ENCODE measurements at regions of chr6 and their contacts with region 1.

Region 1: DNA sequence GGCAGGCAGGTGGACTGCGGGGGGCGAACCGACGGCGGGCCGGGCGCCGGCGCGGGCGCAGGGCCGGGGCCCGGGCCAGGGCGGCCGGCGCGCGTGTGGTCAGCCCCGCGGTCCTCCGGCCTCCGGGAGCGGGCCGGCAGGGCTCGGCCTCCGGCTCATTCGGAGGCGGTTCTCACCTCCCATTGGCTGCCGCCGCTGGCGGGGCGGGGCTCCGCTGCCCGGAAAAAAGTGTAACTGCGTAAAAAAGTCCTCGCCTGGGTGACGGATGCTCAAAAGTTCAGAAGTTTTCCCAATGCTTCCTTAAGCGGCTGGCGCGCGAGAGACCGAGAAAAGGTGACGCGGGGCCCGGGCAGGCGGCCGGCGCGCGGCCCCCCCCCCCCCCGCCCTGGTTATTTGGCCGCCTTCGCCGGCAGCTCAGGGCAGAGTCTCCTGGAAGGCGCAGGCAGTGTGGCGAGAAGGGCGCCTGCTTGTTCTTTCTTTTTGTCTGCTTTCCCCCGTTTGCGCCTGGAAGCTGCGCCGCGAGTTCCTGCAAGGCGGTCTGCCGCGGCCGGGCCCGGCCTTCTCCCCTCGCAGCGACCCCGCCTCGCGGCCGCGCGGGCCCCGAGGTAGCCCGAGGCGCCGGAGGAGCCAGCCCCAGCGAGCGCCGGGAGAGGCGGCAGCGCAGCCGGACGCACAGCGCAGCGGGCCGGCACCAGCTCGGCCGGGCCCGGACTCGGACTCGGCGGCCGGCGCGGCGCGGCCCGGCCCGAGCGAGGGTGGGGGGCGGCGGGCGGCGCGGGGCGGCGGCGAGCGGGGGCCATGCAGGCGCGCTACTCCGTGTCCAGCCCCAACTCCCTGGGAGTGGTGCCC is at the start of gene FOXC1:
- DNase-seq: peak; percentile 92
- ATAC-seq: peak; percentile 95
- total RNA-seq, gene FOXC1: 2.7 TPM

Region 2: DNA sequence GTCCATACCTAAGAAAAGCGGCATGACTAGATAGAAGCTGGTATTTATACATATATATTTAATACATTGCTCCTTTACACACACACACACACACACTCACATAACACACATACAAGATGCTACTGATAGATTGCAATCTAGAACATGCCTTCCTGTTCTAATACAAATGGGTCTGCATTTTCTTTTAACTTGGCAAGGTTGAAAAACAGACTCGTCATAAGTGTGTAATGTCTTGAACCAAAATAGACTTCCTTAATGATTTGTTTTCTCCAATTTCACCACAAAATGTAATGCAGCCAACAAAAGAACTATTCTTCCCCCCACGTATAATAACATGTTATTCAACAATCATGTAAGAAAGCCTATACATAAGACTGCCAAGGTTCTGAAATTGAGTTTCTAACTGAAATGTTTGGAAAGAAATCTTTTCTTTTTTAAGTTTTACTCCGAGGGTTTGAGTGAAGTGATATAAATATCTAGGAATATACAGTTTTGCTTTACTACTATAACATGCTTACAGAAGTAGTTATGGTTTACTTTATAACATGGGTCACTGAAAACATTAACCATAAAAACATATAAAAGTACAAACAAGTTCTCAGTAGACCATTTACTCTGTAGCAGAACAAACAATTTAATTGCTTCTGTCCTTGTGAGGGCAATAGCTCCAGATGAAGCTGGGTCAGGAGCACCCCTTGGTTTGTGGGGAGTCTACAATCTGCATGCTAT is 207.3 kb after region 1 on chr6:
- intact Hi-C with region 1: loop called (anchors 10 kb)
- DNase-seq: no peak
- ATAC-seq: no peak

Region 3: DNA sequence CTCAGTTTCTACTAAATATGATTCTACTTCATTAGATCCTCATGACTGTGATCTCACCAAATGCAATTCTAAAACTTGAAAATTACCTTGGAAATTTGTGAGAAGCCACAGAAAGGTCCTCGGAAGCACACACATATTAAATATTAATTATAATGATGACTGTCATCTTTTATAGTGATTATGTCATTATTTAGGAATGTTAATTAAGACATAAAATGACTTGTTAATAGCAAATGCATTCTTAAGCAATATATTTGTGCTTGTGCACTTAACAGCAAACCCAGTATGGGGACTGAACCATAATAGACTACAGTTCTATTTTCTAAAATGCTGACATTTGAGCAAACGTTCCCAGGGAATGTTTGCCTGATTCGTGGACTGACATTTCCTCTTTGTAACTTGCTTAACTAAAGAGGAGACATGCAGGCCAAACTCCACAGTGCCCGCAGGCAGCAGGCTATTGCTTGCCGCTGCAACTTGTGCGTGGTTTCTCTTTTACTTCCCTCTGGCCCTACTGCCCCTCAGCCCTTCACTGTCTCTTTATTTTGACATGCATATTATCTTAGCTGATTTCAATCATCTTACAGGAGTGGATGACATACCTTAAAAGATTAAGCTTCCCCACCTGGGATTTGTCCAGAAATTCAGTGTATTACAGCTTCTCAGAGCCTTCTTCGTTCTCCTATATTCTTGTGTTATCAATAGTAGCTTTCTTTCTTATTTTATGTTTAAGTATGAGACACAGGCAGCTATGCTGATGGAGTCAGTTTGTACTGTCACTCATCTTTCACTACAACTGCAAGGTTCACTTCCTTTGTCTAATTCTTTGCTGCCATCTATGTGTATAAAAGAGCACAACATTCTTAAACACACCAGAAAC is 494.0 kb after region 1 on chr6:
- intact Hi-C with region 1: loop called (anchors 1 kb)
- DNase-seq: peak; percentile 60
- ATAC-seq: no peak

Region 4: GRCh38 chr6:2196079-2196679 is 586.3 kb after region 1 on chr6:
- intact Hi-C with region 1: loop called (anchors 2 kb)
- DNase-seq: no peak
- ATAC-seq: peak; percentile 50